ENCODE measurements at regions of chr2 and their contacts with region 1.

Region 1: DNA sequence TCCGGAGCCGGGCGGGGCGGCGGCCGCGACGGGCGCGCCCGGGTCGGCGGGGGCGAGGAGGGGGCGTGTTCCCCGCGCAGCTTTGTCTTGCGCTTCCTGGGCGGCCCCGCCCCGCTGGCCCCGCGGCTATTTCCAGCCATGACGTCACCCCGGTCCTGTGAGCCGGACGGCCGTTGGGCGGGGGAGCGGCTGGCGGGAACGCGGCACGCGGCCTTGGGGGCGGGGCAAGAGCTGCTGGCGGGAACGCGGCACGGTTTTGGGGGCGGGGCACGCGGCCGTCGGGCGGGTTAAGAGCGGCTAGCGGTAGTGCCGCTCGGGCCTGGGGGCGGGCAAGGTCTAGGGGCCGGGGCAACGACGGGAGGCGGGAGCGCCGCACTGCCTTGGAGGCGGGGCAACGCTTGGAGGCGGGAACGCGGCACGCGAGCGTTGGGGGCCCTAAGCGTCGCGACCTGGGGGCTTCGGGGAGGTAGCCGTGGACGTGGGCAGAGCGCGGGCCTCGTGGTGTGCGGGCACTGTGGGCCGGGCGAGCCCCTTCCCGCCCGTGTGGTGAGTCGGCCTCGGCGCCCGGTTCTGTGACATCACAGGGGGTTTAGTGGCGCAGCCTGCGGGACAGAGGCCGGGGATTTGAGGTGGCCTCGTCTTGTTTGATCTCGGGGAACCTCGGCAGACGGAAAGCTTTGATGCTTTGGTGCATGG is 704 bp downstream of the KLF11 start:
- DNase-seq: peak; percentile 88
- H3K4me3 ChIP-seq: peak overlapping the region; percentile 27 to 72 (median 67)
- H3K27ac ChIP-seq: peak overlapping the region; percentile 19
- H3K4me1 ChIP-seq: peaks cover 4% of the 10 kb centered on the region
- H3K27me3 ChIP-seq: no peaks in the 10 kb centered on the region
- CTCF ChIP-seq: no peak

Region 2: GRCh38 chr2:9770308-9771100 is 273.6 kb before region 1 on chr2:
- CTCF ChIA-PET with region 1: interaction called, 5 read pairs
- dilution Hi-C with region 1: no loop called
- in situ Hi-C with region 1: no loop called
- intact Hi-C with region 1: loop called (anchors 1 kb)
- DNase-seq: peak; percentile 73
- H3K4me3 ChIP-seq: no peak overlapping the region
- H3K27ac ChIP-seq: peak overlapping the region; percentile 27
- H3K4me1 ChIP-seq: peaks cover 44% of the 10 kb centered on the region
- H3K27me3 ChIP-seq: no peaks in the 10 kb centered on the region
- CTCF ChIP-seq: peak; percentile 68 to 78

Region 3: DNA sequence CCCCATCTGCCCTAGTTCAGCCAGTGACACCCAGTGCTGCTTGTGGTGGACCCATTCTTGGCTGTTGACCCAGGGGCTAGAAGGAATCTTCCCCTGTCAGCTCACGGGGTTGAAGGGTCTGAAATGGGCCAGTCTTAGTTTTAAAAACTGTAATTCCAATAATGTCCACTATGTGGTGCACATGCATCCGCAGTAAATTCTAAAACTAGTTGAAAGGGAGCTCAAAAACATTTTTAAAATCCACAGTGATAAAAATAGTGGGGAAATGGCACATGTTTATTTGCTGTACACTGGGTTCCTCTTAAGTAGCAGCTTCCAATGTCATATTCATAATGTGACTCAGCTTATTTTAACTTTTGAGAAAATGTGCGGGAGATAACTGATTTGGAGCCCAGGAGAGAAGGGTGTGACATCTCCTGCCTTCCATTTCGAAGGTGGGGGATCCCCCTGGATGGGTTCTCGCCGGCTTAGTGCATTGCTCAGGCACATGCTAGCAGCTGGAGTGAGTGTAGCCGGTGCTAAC is 59.8 kb before region 1 on chr2:
- CTCF ChIA-PET with region 1: interaction called, 19 read pairs
- dilution Hi-C with region 1: no loop called
- in situ Hi-C with region 1: no loop called
- intact Hi-C with region 1: loop called (anchors 1 kb)
- DNase-seq: peak; percentile 11
- H3K4me3 ChIP-seq: no peak overlapping the region
- H3K27ac ChIP-seq: no peak overlapping the region
- H3K4me1 ChIP-seq: no peaks in the 10 kb centered on the region
- H3K27me3 ChIP-seq: no peaks in the 10 kb centered on the region
- CTCF ChIP-seq: peak; percentile 65 to 79

Measured in mammary epithelial cell (primary cell).